HepG2 (cell line): ENCODE measurements at regions of chr3 and their contacts with region 1.

Region 1: DNA sequence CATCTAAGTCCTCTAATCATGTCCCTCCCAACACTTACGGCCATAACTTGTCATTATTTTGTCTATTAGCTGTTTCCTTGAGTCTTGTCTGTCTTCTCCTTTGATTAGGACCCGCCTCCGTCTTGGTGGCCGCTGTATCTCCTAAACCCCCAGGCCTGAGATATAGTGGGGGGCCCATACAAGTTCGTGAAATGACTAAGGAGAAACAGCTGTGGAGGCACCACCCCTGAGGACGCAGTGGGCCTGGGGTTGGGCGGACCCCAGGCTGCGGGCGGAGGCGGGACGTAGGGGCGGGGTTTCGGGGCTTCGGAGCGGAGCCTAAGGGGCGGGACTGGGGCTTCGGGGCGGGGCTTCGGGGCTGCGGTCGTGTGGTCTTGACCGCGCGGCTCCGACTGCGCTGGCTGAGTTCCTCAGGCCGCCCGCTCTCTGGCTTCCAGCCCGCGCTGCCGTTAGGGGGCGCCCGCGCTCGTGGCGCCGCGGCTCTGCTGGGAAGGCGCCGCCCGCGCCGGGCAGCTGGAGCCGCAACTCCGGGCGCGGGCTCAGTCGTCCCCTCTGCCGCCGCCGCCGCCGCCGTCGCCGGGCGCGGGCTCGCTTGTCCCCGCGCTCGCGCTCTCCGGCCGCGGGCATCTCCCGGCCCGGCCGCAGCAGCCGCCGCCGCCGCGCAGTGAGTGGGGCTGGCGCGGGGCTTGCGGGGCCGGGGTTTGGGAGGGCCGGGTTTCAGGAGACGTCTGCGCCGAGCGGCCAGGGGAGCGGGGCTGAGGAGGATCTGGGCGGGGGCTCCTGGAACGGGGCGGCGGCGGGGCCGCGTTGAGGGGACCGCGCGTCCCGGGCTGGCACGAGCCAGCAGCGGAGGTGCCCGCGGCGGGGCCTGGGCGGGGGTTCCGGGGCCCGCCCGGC is at the start of gene KCTD6:
- DNase-seq: peak; percentile 81
- ATAC-seq: peak; percentile 93
- H3K4me3 ChIP-seq: peak within 1 kb of the TSS; percentile 69 to 83 (median 78)
- H3K27ac ChIP-seq: peak within 1 kb of the TSS; percentile 42
- H3K4me1 ChIP-seq: peaks cover 84% of the 10 kb centered on the region
- H3K27me3 ChIP-seq: no peaks in the 10 kb centered on the region; a peak in 3 of 5 replicates
- CTCF ChIP-seq: peak; percentile 82
- EP300 ChIP-seq: peak in 1 of 2 experiments; percentile 19; a peak in 1 of 4 replicates
- POLR2A ChIP-seq: no peak; a peak in 1 of 4 replicates
- RAD21 ChIP-seq: peak; percentile 98
- total RNA-seq, gene KCTD6: 14.0 and 14.2 TPM in 2 replicates

Region 2: GRCh38 chr3:58332575-58333188 is 159.1 kb before region 1 on chr3 and contains the start of gene PXK:
- CTCF ChIA-PET with region 1: no interaction called
- POLR2A ChIA-PET with region 1: no interaction called
- in situ Hi-C with region 1: no loop called
- intact Hi-C with region 1: loop called (anchors 2 kb)
- DNase-seq: peak; percentile 21
- ATAC-seq: peak; percentile 88
- H3K4me3 ChIP-seq: peak within 1 kb of the TSS; percentile 82 to 96 (median 91)
- H3K27ac ChIP-seq: peak within 1 kb of the TSS; percentile 49
- H3K4me1 ChIP-seq: peaks cover 40% of the 10 kb centered on the region
- H3K27me3 ChIP-seq: no peaks in the 10 kb centered on the region; a peak in 1 of 5 replicates
- CTCF ChIP-seq: no peak; the same call in none of the 2 replicates
- EP300 ChIP-seq: no peak
- POLR2A ChIP-seq: no peak
- RAD21 ChIP-seq: peak; percentile 70
- total RNA-seq, gene PXK: 5.8 and 6.4 TPM in 2 replicates

Region 3: GRCh38 chr3:58463181-58463941 is 28.4 kb before region 1 on chr3:
- CTCF ChIA-PET with region 1: interaction called, 8 read pairs
- POLR2A ChIA-PET with region 1: no interaction called
- in situ Hi-C with region 1: no loop called
- intact Hi-C with region 1: loop called (anchors 1 kb)
- DNase-seq: peak; percentile 70
- ATAC-seq: peak; percentile 95
- H3K4me3 ChIP-seq: peak overlapping the region; percentile 44 to 55 (median 54)
- H3K27ac ChIP-seq: peak overlapping the region; percentile 82
- H3K4me1 ChIP-seq: peaks cover 29% of the 10 kb centered on the region
- H3K27me3 ChIP-seq: no peaks in the 10 kb centered on the region
- CTCF ChIP-seq: peak; percentile 95
- EP300 ChIP-seq: no peak
- POLR2A ChIP-seq: 0 out of 4 replicates have a peak, but pooled peaks of 1 of the 2 experiments have one; percentile 50
- RAD21 ChIP-seq: peak; percentile 84

Region 4: GRCh38 chr3:58520403-58521335 is 28.9 kb after region 1 on chr3:
- CTCF ChIA-PET with region 1: no interaction called
- POLR2A ChIA-PET with region 1: interaction called, 17 read pairs
- in situ Hi-C with region 1: no loop called
- intact Hi-C with region 1: loop called (anchors 2 kb)
- DNase-seq: peak; percentile 81
- ATAC-seq: peak; percentile 78
- H3K4me3 ChIP-seq: peak overlapping the region in 2 of 3 experiments; percentile 15 to 17; a peak in 2 of 6 replicates
- H3K27ac ChIP-seq: peak overlapping the region; percentile 88
- H3K4me1 ChIP-seq: peaks cover 91% of the 10 kb centered on the region
- H3K27me3 ChIP-seq: no peaks in the 10 kb centered on the region
- CTCF ChIP-seq: peak; percentile 73
- EP300 ChIP-seq: 0 out of 4 replicates have a peak, but pooled peaks of 1 of the 2 experiments have one; percentile 42
- POLR2A ChIP-seq: peak in 1 of 2 experiments; percentile 22; a peak in 1 of 4 replicates
- RAD21 ChIP-seq: peak; percentile 58

Region 5: DNA sequence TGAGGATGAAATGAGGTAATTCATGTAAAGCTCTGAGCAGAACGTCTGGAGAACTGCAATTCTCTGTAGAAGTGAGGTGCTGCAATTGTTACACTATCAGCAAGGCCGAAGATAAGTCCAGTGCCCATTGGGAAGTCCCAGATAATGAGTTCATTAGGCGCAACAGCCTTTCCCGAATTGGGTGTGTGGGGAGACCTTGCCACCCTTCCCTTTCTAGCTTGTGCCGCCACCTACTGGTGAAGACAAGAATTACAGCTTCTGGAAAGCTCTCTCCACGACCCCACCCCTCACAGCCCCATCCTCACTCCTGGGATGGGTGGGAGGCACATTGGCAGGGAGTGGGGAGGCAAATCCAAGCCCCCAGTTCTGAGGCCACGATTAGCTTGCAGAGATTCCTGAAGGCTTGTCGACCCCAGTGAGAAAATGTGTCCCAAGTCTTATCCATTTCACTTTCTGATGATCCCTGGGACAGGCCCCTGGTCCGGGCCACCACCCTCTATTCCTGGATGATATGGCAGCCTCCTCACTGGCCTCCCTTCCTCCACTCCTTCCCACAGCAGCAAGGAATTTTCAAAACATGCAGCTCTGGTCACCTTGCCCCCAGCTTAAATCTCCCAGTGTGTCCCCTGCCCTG is 138.4 kb after region 1 on chr3:
- CTCF ChIA-PET with region 1: no interaction called
- POLR2A ChIA-PET with region 1: no interaction called
- in situ Hi-C with region 1: no loop called
- intact Hi-C with region 1: loop called (anchors 1 kb)
- DNase-seq: peak; percentile 46
- ATAC-seq: peak; percentile 79
- H3K4me3 ChIP-seq: no peak overlapping the region
- H3K27ac ChIP-seq: no peak overlapping the region
- H3K4me1 ChIP-seq: peaks cover 27% of the 10 kb centered on the region
- H3K27me3 ChIP-seq: peaks cover 5 to 31% of the 10 kb centered on the region in 2 experiments
- CTCF ChIP-seq: peak; percentile 93
- EP300 ChIP-seq: no peak
- POLR2A ChIP-seq: no peak
- RAD21 ChIP-seq: peak; percentile 75

Region 6: GRCh38 chr3:58924578-58924977 is 432.8 kb after region 1 on chr3:
- CTCF ChIA-PET with region 1: no interaction called
- POLR2A ChIA-PET with region 1: no interaction called
- in situ Hi-C with region 1: no loop called
- intact Hi-C with region 1: no loop called
- DNase-seq: no peak
- ATAC-seq: no peak
- H3K4me3 ChIP-seq: no peak overlapping the region
- H3K27ac ChIP-seq: no peak overlapping the region
- H3K4me1 ChIP-seq: no peaks in the 10 kb centered on the region
- H3K27me3 ChIP-seq: no peaks in the 10 kb centered on the region
- CTCF ChIP-seq: no peak
- EP300 ChIP-seq: no peak
- POLR2A ChIP-seq: no peak
- RAD21 ChIP-seq: no peak